WTC11 (cell line): ENCODE measurements at regions of chr2 and their contacts with region 1.

Region 1: GRCh38 chr2:70124983-70125480 is 37.8 kb downstream of the PCBP1 start:
- DNase-seq: peak; percentile 61
- ATAC-seq: peak; percentile 49
- H3K4me3 Mint-ChIP-seq: peak overlapping the region; percentile 97
- H3K27ac Mint-ChIP-seq: peak overlapping the region; percentile 100
- H3K4me1 Mint-ChIP-seq: peaks cover 51% of the 10 kb centered on the region
- H3K27me3 Mint-ChIP-seq: no peaks in the 10 kb centered on the region; the same call in 1 of the 2 replicates
- CTCF ChIP-seq: no peak

Region 2: GRCh38 chr2:70104231-70105111 is 20.6 kb before region 1 on chr2:
- CTCF ChIA-PET with region 1: interaction called, 6 read pairs
- POLR2A ChIA-PET with region 1: interaction called, 14 read pairs
- DNase-seq: no peak
- ATAC-seq: 0 out of 2 replicates have a peak, but pooled peaks have one; percentile 15
- H3K4me3 Mint-ChIP-seq: peak overlapping the region; percentile 51
- H3K27ac Mint-ChIP-seq: peak overlapping the region; percentile 86
- H3K4me1 Mint-ChIP-seq: peaks cover 45% of the 10 kb centered on the region
- H3K27me3 Mint-ChIP-seq: no peaks in the 10 kb centered on the region
- CTCF ChIP-seq: no peak

Region 3: GRCh38 chr2:70142590-70143313 is 17.7 kb after region 1 on chr2:
- CTCF ChIA-PET with region 1: interaction called, 5 read pairs
- POLR2A ChIA-PET with region 1: interaction called, 60 read pairs
- DNase-seq: peak; percentile 99
- ATAC-seq: peak; percentile 71
- H3K4me3 Mint-ChIP-seq: peak overlapping the region; percentile 63
- H3K27ac Mint-ChIP-seq: peak overlapping the region; percentile 98
- H3K4me1 Mint-ChIP-seq: peaks cover 37% of the 10 kb centered on the region
- H3K27me3 Mint-ChIP-seq: no peaks in the 10 kb centered on the region
- CTCF ChIP-seq: peak; percentile 77

Region 4: GRCh38 chr2:70391988-70392387 is 267.0 kb after region 1 on chr2:
- CTCF ChIA-PET with region 1: no interaction called
- POLR2A ChIA-PET with region 1: no interaction called
- DNase-seq: no peak
- ATAC-seq: no peak
- H3K4me3 Mint-ChIP-seq: no peak overlapping the region
- H3K27ac Mint-ChIP-seq: no peak overlapping the region
- H3K4me1 Mint-ChIP-seq: no peaks in the 10 kb centered on the region
- H3K27me3 Mint-ChIP-seq: peaks cover 94% of the 10 kb centered on the region
- CTCF ChIP-seq: no peak